Head of caudate nucleus (tissue), 42 donors: ENCODE measurements at regions of chr14 and their contacts with region 1.

Region 1: GRCh38 chr14:94521375-94522114 is 12.3 kb upstream of the SERPINA12 start:
- DNase-seq: peak in 1 of 42 donors; percentile 19

Region 2: GRCh38 chr14:94555991-94556390 is 34.4 kb after region 1 on chr14:
- intact Hi-C with region 1: loop called (anchors 2 kb)
- DNase-seq: no peak